GM12878 (cell line): ENCODE measurements at regions of chr11 and their contacts with region 1.

Region 1: GRCh38 chr11:102920118-102920684 is 35.3 kb downstream of the MMP13 start:
- DNase-seq: peak; percentile 71
- ATAC-seq: peak; percentile 87
- H3K4me3 ChIP-seq: no peak overlapping the region
- H3K27ac ChIP-seq: no peak overlapping the region
- H3K4me1 ChIP-seq: no peaks in the 10 kb centered on the region; the same call in none of the 2 replicates
- H3K27me3 ChIP-seq: peaks cover 0 to 3% of the 10 kb centered on the region in 2 experiments; a peak in 1 of 4 replicates
- CTCF ChIP-seq: no peak
- EP300 ChIP-seq: peak; percentile 10 to 47; a peak in 1 of 4 replicates
- POLR2A ChIP-seq: no peak
- RAD21 ChIP-seq: no peak

Region 2: GRCh38 chr11:102469172-102469821 is 450.9 kb before region 1 on chr11:
- CTCF ChIA-PET with region 1: no interaction called
- POLR2A ChIA-PET with region 1: no interaction called
- RAD21 ChIA-PET with region 1: no interaction called
- SMC1A ChIA-PET with region 1: no interaction called
- in situ Hi-C with region 1: no loop called
- intact Hi-C with region 1: no loop called
- DNase-seq: no peak
- ATAC-seq: no peak
- H3K4me3 ChIP-seq: no peak overlapping the region
- H3K27ac ChIP-seq: no peak overlapping the region
- H3K4me1 ChIP-seq: peaks cover 14% of the 10 kb centered on the region
- H3K27me3 ChIP-seq: no peaks in the 10 kb centered on the region
- CTCF ChIP-seq: no peak
- EP300 ChIP-seq: no peak
- POLR2A ChIP-seq: no peak
- RAD21 ChIP-seq: no peak

Region 3: GRCh38 chr11:102933627-102934026 is 13.4 kb after region 1 on chr11:
- CTCF ChIA-PET with region 1: interaction called, 160 read pairs
- POLR2A ChIA-PET with region 1: interaction called, 71 read pairs
- RAD21 ChIA-PET with region 1: interaction called, 140 read pairs
- SMC1A ChIA-PET with region 1: interaction called, 177 read pairs
- in situ Hi-C with region 1: no loop called
- intact Hi-C with region 1: no loop called
- DNase-seq: peak; percentile 53
- ATAC-seq: peak; percentile 81
- H3K4me3 ChIP-seq: no peak overlapping the region
- H3K27ac ChIP-seq: no peak overlapping the region
- H3K4me1 ChIP-seq: no peaks in the 10 kb centered on the region
- H3K27me3 ChIP-seq: 0 out of 4 replicates have a peak, but pooled peaks cover 0 to under 1% of the 10 kb centered on the region in 2 experiments
- CTCF ChIP-seq: peak in 1 of 3 experiments; percentile 15; a peak in 1 of 6 replicates
- EP300 ChIP-seq: peak in 1 of 2 experiments; percentile 63; a peak in 1 of 4 replicates
- POLR2A ChIP-seq: no peak
- RAD21 ChIP-seq: no peak